Mammary epithelial cell (primary cell): ENCODE measurements at regions of chr13 and their contacts with region 1.

Region 1: DNA sequence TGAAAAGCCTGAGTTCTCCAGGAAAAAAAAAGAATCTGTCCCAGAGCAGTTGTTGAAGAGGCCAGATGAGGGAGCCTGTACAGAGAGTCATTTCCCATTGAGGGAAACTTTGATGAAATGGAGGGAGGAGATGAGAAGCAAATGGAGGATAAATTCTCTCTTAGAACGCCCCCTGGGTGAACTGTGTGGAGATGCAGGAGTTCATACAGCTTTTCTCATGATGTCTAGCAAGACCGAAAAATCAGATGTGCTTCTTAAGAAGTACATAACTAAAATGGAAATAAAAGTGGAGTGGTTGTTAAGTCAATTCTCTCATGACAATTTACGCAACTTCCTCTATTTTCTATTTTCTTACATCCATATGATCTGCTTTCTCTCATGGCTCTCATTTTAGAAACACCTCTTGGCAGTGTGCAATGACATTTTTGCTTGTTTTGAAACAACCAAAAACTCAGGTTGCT is 1263.1 kb downstream of the PCDH9 start:
- DNase-seq: peak; percentile 48
- H3K4me3 ChIP-seq: no peak overlapping the region
- H3K27ac ChIP-seq: no peak overlapping the region
- H3K4me1 ChIP-seq: peaks cover 3% of the 10 kb centered on the region
- H3K27me3 ChIP-seq: no peaks in the 10 kb centered on the region
- CTCF ChIP-seq: peak; percentile 63 to 82

Region 2: DNA sequence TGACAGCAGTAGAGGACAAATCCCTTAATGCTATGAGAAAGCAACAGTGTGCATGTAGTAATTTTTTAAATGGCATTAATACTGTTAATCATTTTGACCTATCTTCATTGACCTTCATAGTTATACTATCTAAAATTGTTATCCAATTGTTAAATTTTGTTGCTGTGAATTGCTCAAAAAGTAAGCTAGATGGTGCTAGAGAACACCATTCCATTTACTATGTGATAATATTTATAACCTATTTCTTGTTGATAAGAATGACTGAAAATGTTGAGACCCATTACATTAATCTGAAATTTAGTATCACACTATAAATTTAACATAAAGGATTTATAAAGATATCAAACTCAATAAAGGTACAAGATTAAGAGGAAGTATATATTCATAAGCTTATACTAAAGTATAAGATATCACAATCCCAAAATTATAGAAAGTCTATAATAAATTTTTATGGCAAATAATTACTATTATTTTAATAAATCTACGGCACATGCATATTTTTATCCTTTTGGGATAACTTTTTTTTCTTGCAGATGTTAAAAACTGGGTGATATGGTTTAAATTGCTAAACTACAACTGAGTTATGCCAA is 310.2 kb before region 1 on chr13:
- CTCF ChIA-PET with region 1: no interaction called
- dilution Hi-C with region 1: no loop called
- in situ Hi-C with region 1: no loop called
- intact Hi-C with region 1: loop called (anchors 2 kb)
- DNase-seq: no peak
- H3K4me3 ChIP-seq: no peak overlapping the region
- H3K27ac ChIP-seq: no peak overlapping the region
- H3K4me1 ChIP-seq: no peaks in the 10 kb centered on the region
- H3K27me3 ChIP-seq: no peaks in the 10 kb centered on the region
- CTCF ChIP-seq: peak; percentile 46 to 60

Region 3: GRCh38 chr13:65727070-65727469 is 240.0 kb before region 1 on chr13:
- CTCF ChIA-PET with region 1: no interaction called
- dilution Hi-C with region 1: no loop called
- in situ Hi-C with region 1: no loop called
- intact Hi-C with region 1: no loop called
- DNase-seq: no peak
- H3K4me3 ChIP-seq: no peak overlapping the region
- H3K27ac ChIP-seq: no peak overlapping the region
- H3K4me1 ChIP-seq: no peaks in the 10 kb centered on the region
- H3K27me3 ChIP-seq: no peaks in the 10 kb centered on the region
- CTCF ChIP-seq: no peak

Region 4: GRCh38 chr13:65744836-65745235 is 222.2 kb before region 1 on chr13:
- CTCF ChIA-PET with region 1: no interaction called
- dilution Hi-C with region 1: no loop called
- in situ Hi-C with region 1: no loop called
- intact Hi-C with region 1: no loop called
- DNase-seq: no peak
- H3K4me3 ChIP-seq: no peak overlapping the region
- H3K27ac ChIP-seq: no peak overlapping the region
- H3K4me1 ChIP-seq: no peaks in the 10 kb centered on the region
- H3K27me3 ChIP-seq: no peaks in the 10 kb centered on the region
- CTCF ChIP-seq: no peak

Region 5: GRCh38 chr13:65913173-65913572 is 53.8 kb before region 1 on chr13:
- CTCF ChIA-PET with region 1: no interaction called
- dilution Hi-C with region 1: no loop called
- in situ Hi-C with region 1: no loop called
- intact Hi-C with region 1: loop called (anchors 5 kb)
- DNase-seq: peak; percentile 63
- H3K4me3 ChIP-seq: no peak overlapping the region
- H3K27ac ChIP-seq: peak overlapping the region; percentile 4
- H3K4me1 ChIP-seq: peaks cover 36% of the 10 kb centered on the region
- H3K27me3 ChIP-seq: no peaks in the 10 kb centered on the region
- CTCF ChIP-seq: no peak

Region 6: DNA sequence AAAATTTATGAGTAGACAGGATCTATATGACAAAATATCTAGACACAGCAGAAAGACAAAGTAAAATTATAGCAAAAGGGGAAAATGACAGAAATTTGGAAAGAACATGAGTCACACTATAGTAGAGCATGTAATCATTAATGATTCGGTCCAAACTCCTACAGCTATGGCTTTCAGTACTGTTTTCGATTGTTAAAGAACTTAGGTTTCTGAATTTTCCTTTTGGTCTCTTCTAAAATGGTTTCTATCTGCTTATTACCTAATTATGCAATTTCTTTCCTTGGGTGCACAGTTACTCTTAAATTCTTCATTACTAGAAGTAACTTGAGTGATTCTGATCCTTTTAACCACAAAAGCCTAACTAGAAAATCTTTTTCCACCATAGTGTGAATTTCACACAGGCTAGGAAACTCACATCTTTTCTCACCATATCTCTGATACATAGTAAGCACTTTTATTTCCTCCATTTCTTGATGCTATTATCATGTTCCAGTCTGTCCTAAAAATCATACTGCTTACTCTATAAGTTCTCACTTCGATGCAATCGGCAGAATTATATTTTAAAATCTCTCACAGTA is 161.8 kb after region 1 on chr13:
- CTCF ChIA-PET with region 1: no interaction called
- dilution Hi-C with region 1: no loop called
- in situ Hi-C with region 1: no loop called
- intact Hi-C with region 1: no loop called
- DNase-seq: no peak
- H3K4me3 ChIP-seq: no peak overlapping the region
- H3K27ac ChIP-seq: no peak overlapping the region
- H3K4me1 ChIP-seq: no peaks in the 10 kb centered on the region
- H3K27me3 ChIP-seq: no peaks in the 10 kb centered on the region
- CTCF ChIP-seq: no peak